ENCODE measurements at regions of chr14 and their contacts with region 1.

Region 1: DNA sequence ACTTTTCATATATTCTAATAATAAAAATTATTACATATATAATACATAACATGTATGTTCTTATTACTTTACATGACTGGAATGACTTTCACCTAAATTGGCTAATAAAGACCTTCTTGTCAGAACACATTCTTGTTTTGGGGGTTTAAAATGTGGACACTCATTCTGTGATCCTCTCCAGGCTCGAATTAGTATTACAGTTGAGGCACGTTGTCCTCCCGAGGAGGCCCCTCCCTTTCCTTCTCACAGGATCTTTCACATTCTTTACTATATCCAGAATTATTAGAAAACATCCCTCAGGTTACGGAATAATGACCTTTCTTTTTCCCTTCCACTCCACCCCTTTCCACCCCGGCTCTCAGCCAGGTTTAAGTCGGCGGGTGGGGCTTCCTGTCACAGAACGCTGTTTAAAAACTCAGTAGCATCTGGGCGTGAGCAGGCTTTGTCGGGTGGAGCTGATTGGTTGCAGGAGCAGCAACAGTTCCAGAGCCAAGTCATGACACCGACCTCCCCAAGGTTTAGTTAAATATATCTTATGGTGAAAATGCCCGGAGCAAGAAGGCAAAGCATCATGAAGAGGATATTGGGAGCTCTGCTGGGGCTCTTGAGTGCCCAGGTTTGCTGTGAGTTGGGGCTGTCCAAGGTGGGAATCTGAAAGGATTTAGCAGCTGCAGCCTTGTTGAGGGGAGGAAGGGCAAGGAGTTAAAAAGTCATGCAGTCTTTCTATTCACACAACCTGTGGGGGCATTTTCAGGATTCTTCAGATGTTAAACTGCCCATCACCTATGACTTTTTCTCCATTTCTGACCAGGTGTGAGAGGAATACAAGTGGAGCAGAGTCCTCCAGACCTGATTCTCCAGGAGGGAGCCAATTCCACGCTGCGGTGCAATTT is 396.7 kb upstream of the OR4E1 start:
- DNase-seq: peak in 7 of 9 donors; percentile 41 to 74 (median 69)
- ATAC-seq: peak; percentile 77
- H3K4me3 ChIP-seq: peak overlapping the region; percentile 83
- H3K4me3 Mint-ChIP-seq: peak overlapping the region; percentile 90 to 97 (median 93)
- H3K27ac ChIP-seq: peak overlapping the region; percentile 63
- H3K27ac Mint-ChIP-seq: peak overlapping the region; percentile 90 to 97 (median 95)
- H3K4me1 ChIP-seq: peaks cover 9 to 13% of the 10 kb centered on the region in 2 donors
- H3K4me1 Mint-ChIP-seq: peaks cover 11 to 64% (median 59%) of the 10 kb centered on the region in 7 donors
- H3K27me3 ChIP-seq: no peaks in the 10 kb centered on the region
- H3K27me3 Mint-ChIP-seq: no peaks in the 10 kb centered on the region

Region 2: GRCh38 chr14:21428930-21429329 is 641.4 kb before region 1 on chr14:
- CTCF ChIA-PET with region 1: no interaction called
- POLR2A ChIA-PET with region 1: no interaction called
- intact Hi-C with region 1: no loop called
- DNase-seq: no peak
- ATAC-seq: no peak
- H3K4me3 ChIP-seq: no peak overlapping the region
- H3K4me3 Mint-ChIP-seq: peak overlapping the region in 1 of 10 donors; percentile 3
- H3K27ac ChIP-seq: no peak overlapping the region
- H3K27ac Mint-ChIP-seq: peak overlapping the region in 1 of 9 donors; percentile 38
- H3K4me1 ChIP-seq: no peaks in the 10 kb centered on the region
- H3K4me1 Mint-ChIP-seq: peaks cover 14 to 36% (median 25%) of the 10 kb centered on the region in 7 donors
- H3K27me3 ChIP-seq: no peaks in the 10 kb centered on the region
- H3K27me3 Mint-ChIP-seq: no peaks in the 10 kb centered on the region

Region 3: GRCh38 chr14:22052795-22053194 is 17.6 kb before region 1 on chr14:
- CTCF ChIA-PET with region 1: interaction called, 12 read pairs
- POLR2A ChIA-PET with region 1: interaction called, 25 read pairs
- intact Hi-C with region 1: loop called (anchors 1 kb)
- DNase-seq: peak in 5 of 9 donors; percentile 20 to 33 (median 21)
- ATAC-seq: peak; percentile 54
- H3K4me3 ChIP-seq: peak overlapping the region; percentile 57
- H3K4me3 Mint-ChIP-seq: peak overlapping the region; percentile 56 to 97 (median 84)
- H3K27ac ChIP-seq: peak overlapping the region; percentile 59
- H3K27ac Mint-ChIP-seq: peak overlapping the region in 8 of 9 donors; percentile 46 to 100 (median 99)
- H3K4me1 ChIP-seq: peaks cover 0 to 5% of the 10 kb centered on the region in 2 donors
- H3K4me1 Mint-ChIP-seq: peaks cover 5 to 56% (median 50%) of the 10 kb centered on the region in 7 donors
- H3K27me3 ChIP-seq: no peaks in the 10 kb centered on the region
- H3K27me3 Mint-ChIP-seq: peaks cover 0 to 2% (median 0%) of the 10 kb centered on the region in 5 donors

Region 4: DNA sequence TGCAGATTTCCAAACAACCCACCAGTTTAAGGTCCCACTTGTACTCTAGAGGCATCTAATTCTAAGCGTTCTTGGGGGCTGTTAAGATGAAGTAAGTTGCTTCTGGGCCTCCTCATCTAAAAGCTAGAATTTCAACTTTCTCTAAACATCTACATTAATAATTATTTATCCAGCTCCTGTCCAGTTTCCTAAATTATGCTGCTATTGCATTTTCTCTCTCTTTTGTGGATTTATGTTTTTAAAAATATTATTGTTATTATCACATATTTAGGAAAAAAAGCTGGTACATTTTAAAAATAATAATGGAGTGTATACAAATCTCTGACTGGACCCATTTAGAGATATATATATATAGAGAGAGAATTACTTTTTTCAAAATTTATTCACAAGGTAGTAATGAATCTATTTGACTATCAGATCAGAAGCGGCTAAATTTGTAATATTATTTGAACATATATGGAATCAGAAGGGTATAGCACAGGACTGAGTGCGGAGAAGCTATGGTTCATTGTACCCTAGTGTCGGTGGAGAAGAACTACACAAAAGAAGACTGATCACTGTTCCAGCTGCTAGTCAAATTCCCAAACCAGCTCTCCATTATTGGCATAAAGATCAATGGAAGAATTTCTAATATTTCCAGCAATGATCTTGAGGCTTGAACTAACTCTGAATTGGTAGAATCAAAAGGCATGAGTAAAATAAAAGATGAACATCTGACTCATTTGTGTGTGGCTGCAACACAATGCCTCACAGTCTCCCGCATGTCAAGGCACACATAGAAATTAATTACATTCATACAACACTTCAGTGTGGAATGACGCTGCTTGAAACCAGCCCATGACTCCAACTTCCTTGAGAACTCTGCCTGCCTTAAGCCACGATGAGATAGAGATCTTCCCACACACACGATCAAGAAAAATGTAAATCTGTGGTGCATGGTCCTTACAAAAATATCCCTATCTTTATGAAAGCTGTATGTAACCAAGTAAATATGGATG is 36.6 kb after region 1 on chr14:
- CTCF ChIA-PET with region 1: interaction called, 5 read pairs
- POLR2A ChIA-PET with region 1: interaction called, 3 read pairs
- intact Hi-C with region 1: loop called in 1 of 2 experiments (anchors 5 kb)
- DNase-seq: no peak
- ATAC-seq: no peak
- H3K4me3 ChIP-seq: no peak overlapping the region
- H3K4me3 Mint-ChIP-seq: peak overlapping the region in 6 of 10 donors; percentile 17 to 60 (median 49)
- H3K27ac ChIP-seq: peak overlapping the region; percentile 14
- H3K27ac Mint-ChIP-seq: peak overlapping the region in 7 of 9 donors; percentile 24 to 78 (median 63)
- H3K4me1 ChIP-seq: peaks cover 0 to 4% of the 10 kb centered on the region in 2 donors
- H3K4me1 Mint-ChIP-seq: peaks cover 0 to 39% (median 18%) of the 10 kb centered on the region in 7 donors
- H3K27me3 ChIP-seq: no peaks in the 10 kb centered on the region
- H3K27me3 Mint-ChIP-seq: no peaks in the 10 kb centered on the region

Region 5: DNA sequence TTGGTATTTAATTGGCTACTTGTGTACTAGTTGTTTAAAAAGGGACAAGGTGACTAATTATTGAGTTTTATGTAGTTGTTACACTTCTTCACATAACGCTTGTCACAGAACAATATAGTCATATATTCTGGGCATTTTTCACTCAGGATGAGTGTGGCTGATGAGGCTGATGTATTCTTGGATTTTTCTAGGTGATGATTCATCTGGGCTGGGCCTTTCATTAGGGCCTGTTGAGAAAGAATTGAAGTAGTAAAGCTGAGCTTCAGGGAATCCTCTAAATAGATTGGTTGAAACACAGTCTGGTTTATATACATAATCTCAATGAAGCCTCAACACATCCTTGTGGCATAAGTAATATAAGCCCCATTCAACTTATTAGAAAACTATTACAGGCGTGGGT is 73.0 kb after region 1 on chr14:
- CTCF ChIA-PET with region 1: no interaction called
- POLR2A ChIA-PET with region 1: no interaction called
- intact Hi-C with region 1: no loop called
- DNase-seq: no peak
- ATAC-seq: no peak
- H3K4me3 ChIP-seq: no peak overlapping the region
- H3K4me3 Mint-ChIP-seq: no peak overlapping the region
- H3K27ac ChIP-seq: no peak overlapping the region
- H3K27ac Mint-ChIP-seq: no peak overlapping the region
- H3K4me1 ChIP-seq: no peaks in the 10 kb centered on the region
- H3K4me1 Mint-ChIP-seq: peaks cover 0 to 7% (median 0%) of the 10 kb centered on the region in 7 donors
- H3K27me3 ChIP-seq: no peaks in the 10 kb centered on the region
- H3K27me3 Mint-ChIP-seq: peaks cover 0 to 9% (median 0%) of the 10 kb centered on the region in 5 donors

Region 6: GRCh38 chr14:22168092-22168955 is 98.0 kb after region 1 on chr14:
- CTCF ChIA-PET with region 1: no interaction called
- POLR2A ChIA-PET with region 1: no interaction called
- intact Hi-C with region 1: no loop called
- DNase-seq: peak in 5 of 9 donors; percentile 1 to 31 (median 11)
- ATAC-seq: no peak
- H3K4me3 ChIP-seq: no peak overlapping the region
- H3K4me3 Mint-ChIP-seq: peak overlapping the region; percentile 62 to 88 (median 80)
- H3K27ac ChIP-seq: peak overlapping the region; percentile 41
- H3K27ac Mint-ChIP-seq: peak overlapping the region; percentile 48 to 91 (median 78)
- H3K4me1 ChIP-seq: no peaks in the 10 kb centered on the region
- H3K4me1 Mint-ChIP-seq: peaks cover 0 to 6% (median 3%) of the 10 kb centered on the region in 7 donors
- H3K27me3 ChIP-seq: no peaks in the 10 kb centered on the region
- H3K27me3 Mint-ChIP-seq: no peaks in the 10 kb centered on the region

Measured in naive thymus-derived CD4-positive, alpha-beta T cell (primary cell).